ENCODE measurements at regions of chr16 and their contacts with region 1.

Region 1: GRCh38 chr16:89217388-89218191 is at the start of gene ZNF778:
- DNase-seq: peak; percentile 87
- H3K4me3 Mint-ChIP-seq: peak within 1 kb of the TSS; percentile 75
- H3K27ac Mint-ChIP-seq: peak within 1 kb of the TSS; percentile 75
- H3K4me1 Mint-ChIP-seq: peaks cover 10% of the 10 kb centered on the region
- H3K27me3 Mint-ChIP-seq: no peaks in the 10 kb centered on the region
- total RNA-seq, gene ZNF778: 7.4 to 7.9 TPM

Region 2: DNA sequence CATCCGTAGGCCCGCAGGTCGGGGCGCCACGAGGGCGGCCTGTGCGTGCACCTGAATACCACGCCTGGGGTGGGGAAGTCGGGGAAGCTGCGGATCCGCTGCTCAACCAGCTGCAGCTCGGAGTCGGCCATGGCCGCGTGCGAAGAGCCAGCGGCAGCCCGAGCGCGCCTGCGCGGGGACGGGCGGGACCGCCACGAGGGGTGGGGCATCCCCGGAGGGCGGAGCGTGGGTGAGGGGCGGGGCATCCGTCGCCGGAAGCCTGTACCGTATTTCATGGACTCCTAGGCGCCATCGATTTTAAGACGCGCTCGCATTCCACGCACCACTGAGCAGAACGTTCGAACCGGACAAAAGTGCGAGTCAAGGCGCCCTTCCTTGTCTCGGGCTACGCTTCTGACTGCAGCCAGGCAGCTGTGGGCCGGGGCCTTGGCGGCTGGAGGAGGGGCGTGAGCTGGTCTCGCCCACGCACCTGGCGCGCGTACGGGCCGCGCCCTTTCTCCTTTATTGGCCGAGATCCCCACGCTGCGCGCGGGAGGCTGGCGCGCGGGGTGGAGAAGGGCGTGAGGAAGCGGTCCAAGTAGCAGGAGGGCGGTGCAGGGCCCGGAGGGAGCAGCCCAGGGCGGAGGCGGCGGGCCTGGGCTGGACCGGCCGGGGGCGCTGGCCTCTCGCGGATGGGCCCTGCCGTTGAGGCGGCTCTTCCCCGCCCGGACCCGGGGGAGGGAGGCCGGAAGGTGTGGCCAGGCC is 405.6 kb before region 1 on chr16 and contains the start of gene APRT:
- CTCF ChIA-PET with region 1: interaction called, 6 read pairs
- POLR2A ChIA-PET with region 1: interaction called, 4 read pairs
- intact Hi-C with region 1: loop called (anchors 1 kb)
- DNase-seq: peak; percentile 98
- H3K4me3 Mint-ChIP-seq: peak within 1 kb of the TSS; percentile 95
- H3K27ac Mint-ChIP-seq: peak within 1 kb of the TSS; percentile 99
- H3K4me1 Mint-ChIP-seq: peaks cover 27% of the 10 kb centered on the region
- H3K27me3 Mint-ChIP-seq: no peaks in the 10 kb centered on the region
- total RNA-seq, gene APRT: 270 to 272 TPM

Region 3: DNA sequence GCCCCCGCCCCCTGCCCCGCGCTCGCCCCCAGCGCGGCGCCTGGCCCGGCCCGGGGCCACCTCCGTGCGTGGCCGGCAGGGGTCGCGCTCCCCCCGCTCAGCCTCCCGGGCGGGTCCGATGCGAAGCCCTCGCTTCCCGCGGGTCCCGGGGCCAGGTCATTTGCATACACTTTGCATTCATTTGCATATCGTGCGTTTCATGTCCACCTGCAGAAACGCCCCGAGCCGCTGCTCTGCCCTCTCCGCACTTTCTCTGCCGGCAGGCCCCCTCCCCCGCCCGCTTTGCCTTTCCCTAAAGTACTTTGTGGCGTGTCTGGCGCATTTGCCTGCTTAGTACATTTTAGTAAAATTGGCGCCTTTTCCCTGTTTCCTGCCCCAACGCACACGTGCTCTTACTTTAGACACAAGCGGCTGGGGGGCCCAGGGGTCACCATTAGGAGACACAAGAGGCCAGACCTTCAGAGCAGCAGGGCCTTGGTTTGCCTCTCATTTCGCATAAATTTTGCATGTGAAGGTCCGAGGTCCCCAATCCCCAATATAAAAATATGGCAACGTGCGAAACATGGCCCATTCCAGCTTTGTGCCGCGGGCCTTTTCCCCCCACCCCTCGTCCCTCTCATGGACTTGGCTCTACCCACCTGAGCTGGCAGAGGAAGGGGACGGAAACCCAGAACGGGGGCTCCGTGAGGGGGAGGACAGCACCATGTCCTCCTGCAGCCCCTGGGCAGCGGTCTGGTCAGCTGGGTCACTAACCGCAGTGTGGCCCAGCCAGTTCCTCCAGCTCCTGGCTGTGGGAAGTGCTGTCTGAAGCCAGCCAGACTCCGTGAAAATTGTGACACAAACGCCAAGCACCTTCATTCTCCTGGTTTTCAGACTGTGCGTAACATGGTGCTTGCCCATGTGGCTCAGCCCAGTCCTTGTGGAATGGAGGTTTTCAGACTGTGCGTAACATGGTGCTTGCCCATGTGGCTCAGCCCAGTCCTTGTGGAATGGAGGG is 275.4 kb before region 1 on chr16:
- CTCF ChIA-PET with region 1: no interaction called
- POLR2A ChIA-PET with region 1: no interaction called
- intact Hi-C with region 1: loop called (anchors 1 kb)
- DNase-seq: peak; percentile 66
- H3K4me3 Mint-ChIP-seq: peak overlapping the region; percentile 23
- H3K27ac Mint-ChIP-seq: no peak overlapping the region
- H3K4me1 Mint-ChIP-seq: no peaks in the 10 kb centered on the region
- H3K27me3 Mint-ChIP-seq: peaks cover 37% of the 10 kb centered on the region

Region 4: GRCh38 chr16:89060207-89060794 is 157.3 kb before region 1 on chr16:
- CTCF ChIA-PET with region 1: no interaction called
- POLR2A ChIA-PET with region 1: no interaction called
- intact Hi-C with region 1: no loop called
- DNase-seq: peak; percentile 53
- H3K4me3 Mint-ChIP-seq: no peak overlapping the region
- H3K27ac Mint-ChIP-seq: no peak overlapping the region
- H3K4me1 Mint-ChIP-seq: no peaks in the 10 kb centered on the region
- H3K27me3 Mint-ChIP-seq: no peaks in the 10 kb centered on the region

Region 5: DNA sequence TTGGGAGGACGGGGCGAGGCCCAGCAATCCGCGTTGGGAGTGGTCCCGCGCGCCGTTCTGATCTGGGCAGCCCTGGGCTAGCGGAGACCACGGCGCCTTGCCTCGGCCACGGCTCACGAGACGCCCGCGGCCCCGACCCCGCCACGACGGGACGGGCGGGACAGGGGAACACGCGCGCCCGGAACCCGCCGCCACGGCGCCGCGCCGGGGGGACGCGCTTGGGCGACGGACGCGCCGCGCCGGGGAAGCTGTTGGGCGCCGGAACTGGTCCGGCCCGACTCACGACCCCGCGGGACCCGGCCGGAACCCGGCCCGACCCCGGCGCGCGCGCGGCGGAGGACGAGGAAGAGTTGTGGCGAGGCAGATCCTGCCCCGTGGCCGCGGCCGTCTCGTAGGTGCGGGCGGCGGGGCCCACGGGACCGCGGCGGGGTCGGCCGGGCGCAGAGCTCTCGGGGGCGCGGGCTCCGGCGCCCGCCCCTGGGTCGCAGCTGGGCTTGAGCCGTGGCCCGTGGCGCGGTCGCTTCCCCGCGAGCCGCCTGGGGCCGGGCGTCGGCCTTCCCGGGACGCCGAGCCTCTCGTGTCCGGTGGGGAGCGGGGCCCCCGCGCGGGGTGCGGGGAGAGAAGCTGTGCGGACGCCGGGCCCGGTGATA is 123.9 kb before region 1 on chr16 and contains the start of gene ACSF3:
- CTCF ChIA-PET with region 1: no interaction called
- POLR2A ChIA-PET with region 1: interaction called, 3 read pairs
- intact Hi-C with region 1: loop called (anchors 10 kb)
- DNase-seq: peak; percentile 70
- H3K4me3 Mint-ChIP-seq: peak within 1 kb of the TSS; percentile 97
- H3K27ac Mint-ChIP-seq: peak within 1 kb of the TSS; percentile 94
- H3K4me1 Mint-ChIP-seq: peaks cover 50% of the 10 kb centered on the region
- H3K27me3 Mint-ChIP-seq: peaks cover 4% of the 10 kb centered on the region
- total RNA-seq, gene ACSF3: 36.1 to 37.3 TPM

Region 6: DNA sequence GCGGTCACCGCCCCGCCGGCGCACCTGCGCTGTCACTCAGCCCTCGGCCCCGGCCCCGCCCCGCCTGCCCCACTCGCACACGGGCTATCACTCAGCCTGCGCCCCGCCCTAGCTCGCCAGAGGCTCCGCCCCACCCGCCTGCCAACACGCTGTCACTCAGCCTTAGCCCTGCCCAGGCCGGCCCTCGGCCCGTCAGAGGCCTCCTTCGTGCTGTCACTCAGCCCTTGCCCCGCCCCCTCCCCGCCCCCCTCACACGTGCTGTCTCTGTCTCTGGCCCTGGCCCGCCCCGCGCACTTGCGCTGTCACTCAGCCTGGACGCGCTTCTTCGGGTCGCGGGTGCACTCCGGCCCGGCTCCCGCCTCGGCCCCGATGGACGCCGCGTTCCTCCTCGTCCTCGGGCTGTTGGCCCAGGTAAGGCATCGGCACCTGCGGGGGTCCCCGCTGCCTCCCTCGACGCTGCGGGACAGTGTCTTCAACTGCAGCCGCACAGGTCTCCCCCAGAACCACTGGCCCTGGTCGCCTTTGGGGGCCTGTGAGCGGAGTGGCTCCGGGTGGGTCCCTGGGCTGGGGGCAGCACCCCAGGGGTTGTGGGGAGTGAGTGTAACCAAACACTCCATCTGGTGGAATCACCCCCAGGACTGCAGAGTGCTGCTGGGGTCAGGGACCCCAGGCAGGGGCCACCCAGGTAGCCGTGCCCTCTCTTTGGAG is 46.0 kb before region 1 on chr16 and contains the start of gene CDH15:
- CTCF ChIA-PET with region 1: interaction called, 4 read pairs
- POLR2A ChIA-PET with region 1: no interaction called
- intact Hi-C with region 1: loop called (anchors 1 kb)
- DNase-seq: peak; percentile 98
- H3K4me3 Mint-ChIP-seq: peak within 1 kb of the TSS; percentile 57
- H3K27ac Mint-ChIP-seq: no peak within 1 kb of the TSS
- H3K4me1 Mint-ChIP-seq: peaks cover 7% of the 10 kb centered on the region
- H3K27me3 Mint-ChIP-seq: peaks cover 4% of the 10 kb centered on the region
- total RNA-seq, gene CDH15: not detected

Region 7: GRCh38 chr16:89458551-89458950 is 241.0 kb after region 1 on chr16:
- CTCF ChIA-PET with region 1: no interaction called
- POLR2A ChIA-PET with region 1: no interaction called
- intact Hi-C with region 1: no loop called
- DNase-seq: no peak
- H3K4me3 Mint-ChIP-seq: no peak overlapping the region
- H3K27ac Mint-ChIP-seq: no peak overlapping the region
- H3K4me1 Mint-ChIP-seq: peaks cover 59% of the 10 kb centered on the region
- H3K27me3 Mint-ChIP-seq: no peaks in the 10 kb centered on the region

Measured in activated CD4-positive, alpha-beta memory T cell treated with anti-CD3 and anti-CD28 coated beads for 36 hours (primary cell).